Psoas muscle (tissue), 8 donors: ENCODE measurements at regions of chr7 and their contacts with region 1.

Region 1: GRCh38 chr7:101815835-101816493 is 1.5 kb upstream of the CUX1 start:
- DNase-seq: peak; percentile 76 to 87
- ATAC-seq: peak; percentile 75 to 87 (median 76)
- H3K4me3 ChIP-seq: peak overlapping the region; percentile 82
- H3K27ac ChIP-seq: peak overlapping the region; percentile 72
- H3K4me1 ChIP-seq: peaks cover 18% of the 10 kb centered on the region
- H3K27me3 ChIP-seq: no peaks in the 10 kb centered on the region
- CTCF ChIP-seq: peak; percentile 34

Region 2: DNA sequence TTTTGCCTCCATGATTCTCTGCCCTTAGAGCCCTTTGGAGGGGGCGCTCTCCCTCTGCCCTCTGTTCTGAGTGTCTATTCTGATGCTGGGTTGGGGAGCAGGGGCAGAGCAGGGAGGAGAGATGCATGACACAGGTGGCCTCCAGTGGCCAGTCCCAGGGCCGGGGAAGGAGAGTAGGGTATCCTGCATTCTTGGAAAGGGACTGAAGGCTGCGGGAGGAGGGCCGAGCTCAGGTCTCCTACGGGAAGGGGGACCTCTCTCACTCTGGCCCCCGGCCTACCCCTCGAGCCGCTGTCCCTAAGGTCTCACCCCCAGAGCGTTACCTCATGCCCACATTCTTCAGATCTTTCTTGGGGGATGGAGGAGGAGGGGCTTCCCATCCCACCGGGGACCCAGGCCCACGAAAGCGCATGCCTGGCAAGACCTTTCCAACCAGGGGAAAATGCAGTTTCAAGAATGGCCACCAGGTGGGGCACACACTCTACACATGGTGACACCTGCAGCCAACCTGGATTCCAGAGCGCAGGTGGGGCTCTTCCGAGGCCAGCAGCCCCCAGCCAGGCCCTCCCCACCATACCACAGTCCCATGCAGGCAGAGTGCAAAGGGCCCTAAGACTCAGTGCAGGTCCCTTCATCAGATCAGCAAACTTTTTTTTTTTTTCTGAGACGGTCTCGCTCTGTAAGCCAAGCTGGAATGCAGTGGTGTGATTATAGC is 273.3 kb before region 1 on chr7:
- intact Hi-C with region 1: loop called in 1 of 2 experiments (anchors 2 kb)
- DNase-seq: peak; percentile 53 to 73
- ATAC-seq: peak; percentile 50 to 82 (median 68)
- H3K4me3 ChIP-seq: no peak overlapping the region
- H3K27ac ChIP-seq: no peak overlapping the region
- H3K4me1 ChIP-seq: no peaks in the 10 kb centered on the region
- H3K27me3 ChIP-seq: no peaks in the 10 kb centered on the region
- CTCF ChIP-seq: peak; percentile 89

Region 3: GRCh38 chr7:101688183-101688831 is 127.7 kb before region 1 on chr7:
- intact Hi-C with region 1: loop called (anchors 2 to 5 kb)
- DNase-seq: peak; percentile 82 to 89
- ATAC-seq: peak; percentile 87 to 98 (median 92)
- H3K4me3 ChIP-seq: peak overlapping the region; percentile 49
- H3K27ac ChIP-seq: no peak overlapping the region
- H3K4me1 ChIP-seq: no peaks in the 10 kb centered on the region
- H3K27me3 ChIP-seq: no peaks in the 10 kb centered on the region
- CTCF ChIP-seq: peak; percentile 95

Region 4: DNA sequence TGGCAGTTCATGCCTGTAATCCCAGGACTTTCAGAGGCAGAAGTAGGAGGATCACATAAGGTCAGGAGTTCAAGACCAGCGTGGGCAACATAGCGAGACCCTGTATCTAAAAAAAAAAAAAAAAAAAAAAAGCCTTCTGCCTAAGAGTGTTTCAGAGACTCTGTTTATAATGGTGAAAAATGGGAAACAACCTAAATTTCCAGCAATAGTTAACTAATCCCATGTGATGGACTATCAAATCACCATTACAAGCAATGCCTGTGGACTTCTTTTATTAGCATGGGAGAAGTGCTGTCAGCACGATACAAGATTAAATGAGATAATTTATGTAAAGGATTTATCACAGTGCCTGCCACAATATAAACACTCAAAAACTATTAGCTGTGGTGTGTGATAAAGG is 66.1 kb before region 1 on chr7:
- intact Hi-C with region 1: no loop called
- DNase-seq: no peak
- ATAC-seq: no peak
- H3K4me3 ChIP-seq: no peak overlapping the region
- H3K27ac ChIP-seq: no peak overlapping the region
- H3K4me1 ChIP-seq: no peaks in the 10 kb centered on the region
- H3K27me3 ChIP-seq: no peaks in the 10 kb centered on the region
- CTCF ChIP-seq: no peak

Region 5: GRCh38 chr7:101856473-101857357 is 40.8 kb after region 1 on chr7:
- intact Hi-C with region 1: loop called in 1 of 2 experiments (anchors 5 kb)
- DNase-seq: peak; percentile 87 to 95
- ATAC-seq: peak; percentile 90 to 95 (median 92)
- H3K4me3 ChIP-seq: peak overlapping the region; percentile 48
- H3K27ac ChIP-seq: peak overlapping the region; percentile 79
- H3K4me1 ChIP-seq: peaks cover 60% of the 10 kb centered on the region
- H3K27me3 ChIP-seq: no peaks in the 10 kb centered on the region
- CTCF ChIP-seq: peak; percentile 48

Region 6: GRCh38 chr7:102236592-102237287 is 420.8 kb after region 1 on chr7:
- intact Hi-C with region 1: loop called in 1 of 2 experiments (anchors 10 kb)
- DNase-seq: peak; percentile 47 to 72
- ATAC-seq: peak; percentile 71 to 94 (median 84)
- H3K4me3 ChIP-seq: no peak overlapping the region
- H3K27ac ChIP-seq: no peak overlapping the region
- H3K4me1 ChIP-seq: no peaks in the 10 kb centered on the region
- H3K27me3 ChIP-seq: no peaks in the 10 kb centered on the region
- CTCF ChIP-seq: peak; percentile 78